ENCODE measurements at regions of chr3 and their contacts with region 1.

Region 1: DNA sequence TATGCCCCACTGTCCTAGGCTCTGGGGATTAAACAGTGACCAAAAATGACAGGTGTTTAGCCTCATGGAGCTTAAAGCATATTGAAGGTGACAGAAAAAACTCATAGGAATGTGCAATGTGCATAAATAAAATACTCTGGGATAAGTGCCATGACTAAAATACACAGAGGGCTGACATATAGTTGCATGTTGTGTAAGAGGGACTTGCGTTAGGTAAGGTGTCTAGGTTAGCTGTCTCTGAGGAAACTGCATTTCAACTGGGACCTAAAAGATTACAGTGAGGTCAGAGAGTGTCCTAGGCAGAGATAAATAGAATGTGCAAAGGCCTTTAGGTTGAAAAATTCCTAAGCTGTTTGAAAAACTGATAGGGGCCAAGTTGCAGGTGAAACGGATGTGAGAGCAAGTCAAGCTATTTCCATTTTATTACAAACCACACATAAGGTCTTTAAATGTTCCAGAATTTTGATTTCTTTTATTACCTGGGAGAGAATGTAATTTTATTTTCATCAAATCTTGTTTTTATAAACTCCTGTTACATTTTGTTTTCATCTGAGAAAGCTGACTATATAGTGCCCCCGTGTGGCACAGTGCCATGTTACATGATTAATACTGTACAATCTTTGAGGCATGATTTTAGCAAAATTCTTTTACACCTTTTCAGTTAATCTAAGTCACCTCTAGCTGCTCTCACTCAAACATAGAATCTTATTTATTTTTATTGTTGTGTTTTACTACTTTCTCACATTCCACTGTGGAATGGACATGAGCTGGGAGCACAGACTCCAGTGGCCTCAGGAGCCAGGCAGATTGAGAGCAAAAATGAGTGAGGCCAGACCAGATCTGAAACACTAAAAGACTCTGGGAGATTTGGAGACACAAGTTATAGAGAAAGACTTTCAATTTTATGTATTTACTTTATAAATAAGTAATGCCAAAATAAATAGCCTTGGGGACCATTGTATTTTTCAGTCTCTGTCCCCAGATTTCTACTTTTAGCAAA is 259.6 kb upstream of the ZNF717 start:
- DNase-seq: no peak
- H3K4me3 ChIP-seq: no peak overlapping the region
- H3K27ac ChIP-seq: no peak overlapping the region
- H3K27me3 ChIP-seq: no peaks in the 10 kb centered on the region
- CTCF ChIP-seq: peak; percentile 59

Region 2: GRCh38 chr3:76024640-76025039 is 20.3 kb before region 1 on chr3:
- CTCF ChIA-PET with region 1: interaction called, 36 read pairs
- POLR2A ChIA-PET with region 1: interaction called, 3 read pairs
- DNase-seq: no peak
- H3K4me3 ChIP-seq: no peak overlapping the region
- H3K27ac ChIP-seq: no peak overlapping the region
- H3K27me3 ChIP-seq: no peaks in the 10 kb centered on the region
- CTCF ChIP-seq: peak; percentile 71

Region 3: DNA sequence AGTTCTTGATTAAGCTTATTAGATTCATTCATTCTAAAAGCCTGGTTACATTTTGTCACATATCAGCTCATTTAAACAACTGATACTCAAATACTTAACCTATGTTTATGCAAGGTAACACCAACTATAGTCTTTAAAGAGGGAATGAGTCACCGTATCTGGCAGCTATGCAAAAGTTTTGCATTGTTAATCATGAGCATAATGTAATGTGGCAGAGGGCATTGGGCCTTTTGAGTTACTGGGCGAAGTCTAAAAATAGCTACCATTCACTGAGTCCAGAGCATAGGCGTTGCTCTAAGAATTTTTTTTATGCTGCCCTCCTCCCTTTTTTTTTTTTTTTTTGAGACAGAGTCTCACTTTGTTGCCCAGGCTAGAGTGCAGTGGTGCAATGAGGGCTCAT is 18.1 kb after region 1 on chr3:
- CTCF ChIA-PET with region 1: interaction called, 24 read pairs
- POLR2A ChIA-PET with region 1: interaction called, 3 read pairs
- DNase-seq: peak; percentile 59
- H3K4me3 ChIP-seq: no peak overlapping the region
- H3K27ac ChIP-seq: no peak overlapping the region
- H3K27me3 ChIP-seq: no peaks in the 10 kb centered on the region
- CTCF ChIP-seq: no peak

Region 4: DNA sequence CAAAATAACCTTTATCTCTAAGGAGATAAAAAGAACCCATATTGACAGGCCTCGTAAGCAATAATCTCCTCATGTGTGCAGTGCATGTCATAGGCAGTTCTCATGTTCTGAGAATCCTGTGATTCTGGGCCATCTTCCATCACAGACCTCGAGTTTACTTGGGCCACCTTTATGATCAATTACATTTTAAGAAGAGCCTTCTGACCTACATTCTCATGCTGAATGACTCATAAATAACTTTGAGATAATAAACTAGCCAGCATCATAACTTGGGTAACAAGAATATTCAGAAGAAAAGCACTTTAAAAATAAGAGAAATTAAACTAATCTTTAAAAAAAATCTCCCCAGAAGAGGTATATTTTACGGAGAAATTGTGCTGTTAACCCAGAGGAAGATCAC is 51.1 kb after region 1 on chr3:
- CTCF ChIA-PET with region 1: interaction called, 12 read pairs
- POLR2A ChIA-PET with region 1: no interaction called
- DNase-seq: no peak
- H3K4me3 ChIP-seq: no peak overlapping the region
- H3K27ac ChIP-seq: no peak overlapping the region
- H3K27me3 ChIP-seq: no peaks in the 10 kb centered on the region
- CTCF ChIP-seq: no peak